IMR-90 (cell line): ENCODE measurements at regions of chr4 and their contacts with region 1.

Region 1: GRCh38 chr4:119692001-119692400 is 63.4 kb upstream of the PDE5A start:
- DNase-seq: peak; percentile 67
- ATAC-seq: peak; percentile 62
- H3K4me3 ChIP-seq: no peak overlapping the region
- H3K27ac ChIP-seq: peak overlapping the region; percentile 36; the same call in 1 of the 2 replicates
- H3K4me1 ChIP-seq: peaks cover 9% of the 10 kb centered on the region
- H3K27me3 ChIP-seq: no peaks in the 10 kb centered on the region
- CTCF ChIP-seq: peak; percentile 51
- POLR2A ChIP-seq: no peak
- RAD21 ChIP-seq: peak; percentile 63

Region 2: GRCh38 chr4:118869808-118870342 is 822.1 kb before region 1 on chr4:
- CTCF ChIA-PET with region 1: no interaction called
- POLR2A ChIA-PET with region 1: no interaction called
- dilution Hi-C with region 1: no loop called
- in situ Hi-C with region 1: no loop called
- intact Hi-C with region 1: no loop called
- DNase-seq: peak; percentile 63
- ATAC-seq: peak; percentile 62
- H3K4me3 ChIP-seq: no peak overlapping the region
- H3K27ac ChIP-seq: no peak overlapping the region
- H3K4me1 ChIP-seq: no peaks in the 10 kb centered on the region
- H3K27me3 ChIP-seq: no peaks in the 10 kb centered on the region
- CTCF ChIP-seq: no peak
- POLR2A ChIP-seq: no peak
- RAD21 ChIP-seq: no peak

Region 3: DNA sequence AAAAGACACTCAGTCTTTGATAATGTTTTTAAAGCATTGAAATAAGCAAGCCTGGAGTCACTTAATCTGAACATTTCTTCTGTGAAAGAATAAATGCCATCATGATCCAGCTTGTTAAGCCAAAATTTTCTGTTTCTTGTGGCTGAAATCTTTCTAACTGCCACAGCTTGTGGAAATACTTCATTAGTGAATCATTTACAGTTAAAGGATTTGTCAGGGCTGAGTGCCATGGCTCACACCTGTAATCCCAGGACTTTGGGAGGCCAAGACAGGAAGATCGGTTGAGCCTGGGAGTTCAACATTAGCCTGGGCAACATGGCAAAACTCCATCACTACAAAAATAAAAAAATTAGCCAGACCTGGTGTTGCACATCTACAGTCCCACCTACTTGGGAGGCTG is 29.9 kb after region 1 on chr4:
- CTCF ChIA-PET with region 1: no interaction called
- POLR2A ChIA-PET with region 1: interaction called, 5 read pairs
- dilution Hi-C with region 1: no loop called
- in situ Hi-C with region 1: loop called (anchors 5 kb)
- intact Hi-C with region 1: no loop called
- DNase-seq: no peak
- ATAC-seq: no peak
- H3K4me3 ChIP-seq: no peak overlapping the region
- H3K27ac ChIP-seq: no peak overlapping the region
- H3K4me1 ChIP-seq: peaks cover 8% of the 10 kb centered on the region; the same call in 1 of the 2 replicates
- H3K27me3 ChIP-seq: no peaks in the 10 kb centered on the region
- CTCF ChIP-seq: no peak
- POLR2A ChIP-seq: no peak
- RAD21 ChIP-seq: no peak

Region 4: DNA sequence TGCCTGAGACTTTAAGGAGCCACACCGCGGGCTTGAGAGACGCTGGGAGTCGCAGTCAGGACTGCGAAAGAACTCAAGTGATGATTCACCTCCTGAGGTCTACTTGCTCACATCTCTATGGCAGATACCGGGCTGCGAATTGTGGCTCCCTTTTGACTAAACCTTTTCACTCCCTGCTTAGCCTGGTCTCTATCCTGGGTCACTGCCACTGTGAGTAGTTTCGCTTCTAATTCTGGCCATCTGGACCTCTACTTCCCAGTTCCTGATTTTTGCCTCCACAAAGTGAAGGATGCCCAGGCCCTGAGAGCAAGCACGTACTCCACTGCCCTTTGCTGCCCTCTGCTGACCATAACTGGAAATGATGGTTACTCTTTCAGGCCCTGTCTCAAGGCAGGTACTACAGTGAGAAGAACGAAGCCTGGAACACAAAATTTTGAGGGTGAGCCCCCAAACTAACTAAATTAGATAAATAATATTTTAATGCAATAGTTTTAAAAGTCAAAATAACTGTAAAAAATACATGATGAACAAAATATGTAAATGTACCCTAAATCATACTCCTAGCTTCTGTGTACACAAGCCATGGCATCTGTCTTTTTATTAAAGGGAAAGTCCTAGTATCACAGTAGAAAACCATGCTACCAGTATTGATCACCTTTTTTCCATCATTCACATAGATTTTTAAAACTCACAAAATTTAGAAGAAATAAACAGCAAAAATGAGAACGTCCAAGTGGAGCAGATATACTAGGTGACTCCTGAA is 357.9 kb after region 1 on chr4:
- CTCF ChIA-PET with region 1: no interaction called
- POLR2A ChIA-PET with region 1: no interaction called
- dilution Hi-C with region 1: no loop called
- in situ Hi-C with region 1: no loop called
- intact Hi-C with region 1: loop called (anchors 1 kb)
- DNase-seq: peak; percentile 92
- ATAC-seq: peak; percentile 84
- H3K4me3 ChIP-seq: peak overlapping the region; percentile 21; the same call in 1 of the 2 replicates
- H3K27ac ChIP-seq: peak overlapping the region; percentile 85
- H3K4me1 ChIP-seq: peaks cover 4% of the 10 kb centered on the region
- H3K27me3 ChIP-seq: no peaks in the 10 kb centered on the region
- CTCF ChIP-seq: peak; percentile 87
- POLR2A ChIP-seq: no peak
- RAD21 ChIP-seq: peak; percentile 95